ENCODE measurements at regions of chr12 and their contacts with region 1.

Region 1: DNA sequence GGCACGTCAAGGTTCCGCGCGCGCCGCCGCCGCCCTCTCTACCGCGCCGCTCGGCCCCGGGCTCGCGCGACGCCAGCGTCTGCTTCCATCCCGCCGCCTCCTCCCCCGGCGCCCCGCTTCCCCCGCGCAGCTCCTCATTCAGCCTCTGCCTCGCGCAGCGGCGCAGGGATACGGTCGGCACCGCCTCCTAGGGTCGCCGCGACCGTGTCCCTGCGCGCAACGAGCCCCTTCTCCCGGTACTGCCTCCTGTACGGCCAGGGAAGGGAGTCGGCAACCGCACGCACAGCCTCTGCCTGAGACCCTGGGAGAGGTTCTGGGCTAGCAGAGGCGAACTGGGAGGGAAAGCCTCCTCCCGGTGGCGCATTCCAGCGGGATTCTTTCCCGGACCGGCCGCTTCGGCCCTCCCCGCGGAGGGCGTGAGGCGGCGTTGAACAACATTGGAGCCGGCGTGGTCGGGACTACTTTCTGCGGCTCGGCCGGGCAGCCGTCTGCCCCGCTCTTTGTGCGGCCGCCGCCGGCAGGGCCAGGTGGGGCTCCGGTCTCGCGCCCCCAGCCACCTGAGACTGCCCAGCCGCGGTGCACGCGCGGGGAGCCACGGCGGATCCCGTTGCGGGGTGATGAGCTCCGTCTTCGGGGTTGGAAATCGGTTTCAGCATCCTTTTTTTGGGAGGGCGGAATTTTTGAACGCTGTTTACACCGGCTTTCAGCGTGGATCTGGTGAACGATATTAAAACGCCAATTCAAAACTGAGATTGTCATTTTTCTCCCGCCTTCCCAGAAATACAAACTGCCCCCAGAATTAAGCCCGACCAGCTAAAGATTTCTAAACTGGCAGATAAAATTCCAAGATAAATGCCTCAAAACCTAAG is at the start of gene LRP6:
- DNase-seq: peak; percentile 65 to 94
- H3K4me3 ChIP-seq: peak within 1 kb of the TSS; percentile 92 to 97 (median 96)
- H3K27ac ChIP-seq: peak within 1 kb of the TSS; percentile 100
- H3K4me1 ChIP-seq: peaks cover 0 to 5% (median 1%) of the 10 kb centered on the region in 4 experiments; a peak in 4 of 7 replicates
- H3K27me3 ChIP-seq: no peaks in the 10 kb centered on the region
- CTCF ChIP-seq: no peak
- EP300 ChIP-seq: peak in 1 of 2 experiments; percentile 11; a peak in 1 of 3 replicates
- POLR2A ChIP-seq: peak; percentile 84 to 92
- RAD21 ChIP-seq: peak in 1 of 2 experiments; percentile 22; a peak in 1 of 4 replicates
- total RNA-seq, gene LRP6: 73.2 and 74.0 TPM in 2 replicates

Region 2: DNA sequence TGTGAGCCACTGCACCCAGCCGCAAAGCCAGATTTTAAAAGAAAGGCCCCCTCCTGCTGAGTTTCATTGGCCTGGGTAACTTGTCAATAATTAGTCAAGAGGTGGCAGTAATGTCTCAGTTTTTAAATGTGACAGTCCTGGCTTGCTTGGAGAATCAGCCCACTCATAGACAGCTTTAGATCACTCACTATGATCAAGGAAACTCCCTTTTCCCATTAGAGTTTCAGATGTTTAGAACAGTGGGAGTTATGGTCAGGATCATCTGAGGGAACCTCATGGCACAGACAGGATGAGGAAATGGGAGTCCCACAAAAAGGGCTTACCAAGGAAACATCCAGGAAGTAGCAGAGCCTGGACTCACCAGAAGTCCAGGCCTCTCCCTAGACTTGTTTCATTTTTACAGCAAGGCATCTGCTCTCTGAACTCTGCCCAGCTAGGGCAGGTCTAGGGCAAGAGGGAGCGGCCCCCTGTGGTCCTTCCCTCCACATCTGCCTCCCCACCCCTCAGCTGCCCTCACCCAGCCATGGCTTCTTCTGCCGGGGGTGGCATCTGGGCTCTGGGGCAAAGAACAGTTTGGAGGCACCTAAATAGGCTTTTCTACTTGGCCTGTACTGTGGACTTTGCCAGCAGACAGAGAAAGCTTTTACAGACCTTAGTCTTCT is 185.1 kb before region 1 on chr12:
- CTCF ChIA-PET with region 1: interaction called, 3 read pairs
- POLR2A ChIA-PET with region 1: interaction called, 11 read pairs
- DNase-seq: peak in 1 of 2 experiments; percentile 52
- H3K4me3 ChIP-seq: no peak overlapping the region
- H3K27ac ChIP-seq: no peak overlapping the region
- H3K4me1 ChIP-seq: peaks cover 5 to 12% (median 7%) of the 10 kb centered on the region in 4 experiments; a peak in 6 of 7 replicates
- H3K27me3 ChIP-seq: no peaks in the 10 kb centered on the region
- CTCF ChIP-seq: peak in 2 of 3 experiments; percentile 24 to 34; a peak in 2 of 4 replicates
- EP300 ChIP-seq: no peak
- POLR2A ChIP-seq: no peak
- RAD21 ChIP-seq: peak; percentile 70 to 78

Region 3: GRCh38 chr12:12194206-12194605 is 72.9 kb before region 1 on chr12:
- CTCF ChIA-PET with region 1: no interaction called
- POLR2A ChIA-PET with region 1: no interaction called
- DNase-seq: no peak
- H3K4me3 ChIP-seq: no peak overlapping the region
- H3K27ac ChIP-seq: no peak overlapping the region
- H3K4me1 ChIP-seq: no peaks in the 10 kb centered on the region
- H3K27me3 ChIP-seq: no peaks in the 10 kb centered on the region
- CTCF ChIP-seq: no peak
- EP300 ChIP-seq: no peak
- POLR2A ChIP-seq: no peak
- RAD21 ChIP-seq: no peak

Region 4: GRCh38 chr12:12240662-12241340 is 26.3 kb before region 1 on chr12:
- CTCF ChIA-PET with region 1: interaction called, 3 read pairs
- POLR2A ChIA-PET with region 1: interaction called, 21 read pairs
- DNase-seq: no peak
- H3K4me3 ChIP-seq: no peak overlapping the region
- H3K27ac ChIP-seq: no peak overlapping the region
- H3K4me1 ChIP-seq: peaks cover 0 to 3% (median 1%) of the 10 kb centered on the region in 4 experiments; a peak in 2 of 7 replicates
- H3K27me3 ChIP-seq: no peaks in the 10 kb centered on the region
- CTCF ChIP-seq: no peak
- EP300 ChIP-seq: no peak
- POLR2A ChIP-seq: no peak
- RAD21 ChIP-seq: no peak

Region 5: GRCh38 chr12:12282761-12283425 is 15.8 kb after region 1 on chr12:
- CTCF ChIA-PET with region 1: interaction called, 4 read pairs
- POLR2A ChIA-PET with region 1: interaction called, 19 read pairs
- DNase-seq: no peak
- H3K4me3 ChIP-seq: no peak overlapping the region
- H3K27ac ChIP-seq: no peak overlapping the region
- H3K4me1 ChIP-seq: peaks cover 0 to 23% (median 10%) of the 10 kb centered on the region in 4 experiments; a peak in 5 of 7 replicates
- H3K27me3 ChIP-seq: no peaks in the 10 kb centered on the region; a peak in 1 of 7 replicates
- CTCF ChIP-seq: no peak
- EP300 ChIP-seq: no peak
- POLR2A ChIP-seq: no peak
- RAD21 ChIP-seq: no peak

Region 6: DNA sequence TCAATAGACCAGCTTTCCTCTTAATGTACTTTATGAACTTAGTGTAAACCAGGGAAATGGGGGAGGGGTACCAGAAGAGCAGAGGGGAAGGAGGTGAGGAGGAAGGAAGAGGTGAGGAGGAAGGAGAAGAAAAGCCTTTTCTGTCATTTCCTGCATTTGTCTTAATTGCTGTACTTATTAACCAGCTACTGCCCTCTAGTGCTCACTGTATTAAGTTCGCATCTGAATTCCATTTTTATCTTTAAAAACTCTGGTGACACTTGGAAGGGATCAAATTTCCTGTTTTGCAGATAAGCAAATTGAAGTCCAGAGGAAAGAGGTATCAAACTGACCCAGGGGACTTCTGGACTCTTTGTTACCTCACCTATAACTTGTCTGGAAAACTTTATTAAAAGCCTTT is 60.7 kb after region 1 on chr12:
- CTCF ChIA-PET with region 1: interaction called, 12 read pairs
- POLR2A ChIA-PET with region 1: interaction called, 19 read pairs
- DNase-seq: no peak
- H3K4me3 ChIP-seq: no peak overlapping the region
- H3K27ac ChIP-seq: no peak overlapping the region
- H3K4me1 ChIP-seq: peaks cover 4 to 11% (median 9%) of the 10 kb centered on the region in 4 experiments; a peak in 4 of 7 replicates
- H3K27me3 ChIP-seq: no peaks in the 10 kb centered on the region
- CTCF ChIP-seq: peak in 2 of 3 experiments; percentile 46 to 74; a peak in 2 of 4 replicates
- EP300 ChIP-seq: no peak
- POLR2A ChIP-seq: no peak
- RAD21 ChIP-seq: peak; percentile 79 to 83

Region 7: DNA sequence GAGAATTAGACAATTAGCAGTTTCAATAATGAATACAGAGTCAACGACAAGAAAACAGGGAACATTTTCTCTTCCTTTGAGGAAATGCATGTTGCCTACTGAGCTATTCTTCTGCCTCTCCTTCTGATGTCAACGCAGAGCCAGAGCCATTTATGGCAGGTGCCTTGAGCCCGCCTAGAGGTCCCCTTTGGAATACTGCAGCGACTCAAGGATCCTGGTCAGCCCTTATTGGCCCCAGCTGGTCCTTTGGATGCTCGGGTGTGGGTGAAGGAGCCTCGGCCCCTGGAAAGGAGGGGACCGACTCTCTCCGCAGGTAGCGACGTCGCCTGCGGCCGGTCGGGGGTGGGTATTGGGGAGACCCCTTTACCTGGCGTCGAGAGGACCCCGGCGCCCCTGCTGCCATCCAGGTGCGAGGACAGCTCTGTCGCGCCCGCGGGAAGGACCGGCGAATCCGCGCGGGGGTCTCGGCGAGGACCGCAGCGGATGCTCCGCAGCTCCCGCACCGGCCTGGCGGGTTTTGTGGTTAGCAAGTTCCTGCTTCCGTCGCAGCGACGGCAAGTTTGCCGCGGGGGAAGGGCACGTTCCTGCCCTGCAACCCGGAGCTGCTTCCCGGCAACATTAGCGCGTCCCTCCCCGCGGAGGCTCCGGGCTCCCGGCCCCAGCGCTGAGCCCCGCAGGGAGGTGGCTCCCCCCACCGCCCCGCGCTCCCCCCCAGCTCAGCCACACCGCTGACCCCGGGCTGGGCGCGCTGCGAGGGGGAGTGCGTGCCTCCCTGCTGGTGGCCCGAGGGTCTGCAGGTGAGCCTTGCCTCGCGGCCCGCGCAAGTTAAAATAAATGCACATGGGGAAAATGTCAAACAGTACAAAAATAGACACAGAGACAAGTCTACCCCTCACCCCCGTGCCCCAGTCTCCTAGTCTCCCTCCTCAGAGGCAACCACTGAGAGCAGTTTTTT is 82.9 kb after region 1 on chr12 and contains the start of gene MANSC1:
- CTCF ChIA-PET with region 1: no interaction called
- POLR2A ChIA-PET with region 1: interaction called, 12 read pairs
- DNase-seq: peak in 1 of 2 experiments; percentile 82
- H3K4me3 ChIP-seq: peak within 1 kb of the TSS; percentile 48 to 72 (median 60)
- H3K27ac ChIP-seq: no peak within 1 kb of the TSS
- H3K4me1 ChIP-seq: peaks cover 0 to 3% (median 1%) of the 10 kb centered on the region in 4 experiments; a peak in 3 of 7 replicates
- H3K27me3 ChIP-seq: 0 out of 7 replicates have a peak, but pooled peaks cover 0 to 4% (median 0%) of the 10 kb centered on the region in 4 experiments
- CTCF ChIP-seq: peak; percentile 14 to 66 (median 43); a peak in 3 of 4 replicates
- EP300 ChIP-seq: no peak
- POLR2A ChIP-seq: peak in 1 of 2 experiments; percentile 71; a peak in 2 of 3 replicates
- RAD21 ChIP-seq: peak; percentile 25 to 29
- total RNA-seq, gene MANSC1: 6.1 and 8.9 TPM in 2 replicates

Measured in H1 (cell line).